Caco-2 (cell line): ENCODE measurements at regions of chr15 and their contacts with region 1.

Region 1: DNA sequence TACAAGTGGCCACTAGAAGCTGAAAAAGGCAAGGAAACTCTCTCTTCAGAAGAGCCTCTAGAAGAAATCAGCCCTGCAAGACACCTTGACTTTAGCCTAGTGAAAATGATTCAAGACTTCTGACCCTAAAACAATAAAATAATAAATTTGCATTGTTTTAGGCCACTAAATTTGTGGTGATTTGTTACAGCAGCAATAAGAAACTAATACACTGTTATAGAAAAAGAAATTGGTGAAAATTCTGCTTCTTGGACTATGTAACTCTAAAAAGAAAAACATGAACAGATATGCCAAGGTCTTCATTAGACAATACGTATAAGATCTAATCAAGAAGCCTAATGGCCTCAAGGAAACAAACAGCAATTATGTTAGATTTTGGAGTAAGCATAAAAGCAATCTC is 36.1 kb downstream of the EXD1 start:
- DNase-seq: no peak
- H3K4me3 ChIP-seq: no peak overlapping the region
- H3K4me3 Mint-ChIP-seq: no peak overlapping the region
- H3K27ac Mint-ChIP-seq: no peak overlapping the region
- H3K4me1 ChIP-seq: no peaks in the 10 kb centered on the region
- H3K4me1 Mint-ChIP-seq: no peaks in the 10 kb centered on the region
- H3K27me3 ChIP-seq: no peaks in the 10 kb centered on the region
- H3K27me3 Mint-ChIP-seq: no peaks in the 10 kb centered on the region
- CTCF ChIP-seq: no peak

Region 2: DNA sequence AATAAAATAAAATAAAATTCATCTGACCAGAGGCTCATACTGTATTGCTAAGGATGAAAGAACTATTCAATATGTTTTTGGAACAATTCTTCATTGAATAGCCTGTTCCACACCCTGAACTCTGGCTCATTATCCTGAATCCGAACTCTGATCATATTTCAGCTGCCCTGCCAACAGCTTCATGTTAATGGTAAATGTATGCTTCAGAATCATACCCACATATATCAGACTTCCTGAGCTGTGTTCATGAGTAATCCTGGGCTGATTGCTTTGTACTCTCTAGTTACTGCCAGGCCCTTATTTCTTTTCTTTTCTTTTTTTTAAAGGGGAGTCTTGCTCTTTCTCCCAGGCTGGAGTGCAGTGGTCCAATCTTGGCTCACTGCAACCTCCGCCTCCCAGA is 90.2 kb before region 1 on chr15:
- CTCF ChIA-PET with region 1: no interaction called
- POLR2A ChIA-PET with region 1: no interaction called
- intact Hi-C with region 1: no loop called
- DNase-seq: no peak
- H3K4me3 ChIP-seq: no peak overlapping the region
- H3K4me3 Mint-ChIP-seq: no peak overlapping the region
- H3K27ac Mint-ChIP-seq: no peak overlapping the region
- H3K4me1 ChIP-seq: no peaks in the 10 kb centered on the region
- H3K4me1 Mint-ChIP-seq: peaks cover 6% of the 10 kb centered on the region
- H3K27me3 ChIP-seq: no peaks in the 10 kb centered on the region
- H3K27me3 Mint-ChIP-seq: no peaks in the 10 kb centered on the region
- CTCF ChIP-seq: no peak

Region 3: DNA sequence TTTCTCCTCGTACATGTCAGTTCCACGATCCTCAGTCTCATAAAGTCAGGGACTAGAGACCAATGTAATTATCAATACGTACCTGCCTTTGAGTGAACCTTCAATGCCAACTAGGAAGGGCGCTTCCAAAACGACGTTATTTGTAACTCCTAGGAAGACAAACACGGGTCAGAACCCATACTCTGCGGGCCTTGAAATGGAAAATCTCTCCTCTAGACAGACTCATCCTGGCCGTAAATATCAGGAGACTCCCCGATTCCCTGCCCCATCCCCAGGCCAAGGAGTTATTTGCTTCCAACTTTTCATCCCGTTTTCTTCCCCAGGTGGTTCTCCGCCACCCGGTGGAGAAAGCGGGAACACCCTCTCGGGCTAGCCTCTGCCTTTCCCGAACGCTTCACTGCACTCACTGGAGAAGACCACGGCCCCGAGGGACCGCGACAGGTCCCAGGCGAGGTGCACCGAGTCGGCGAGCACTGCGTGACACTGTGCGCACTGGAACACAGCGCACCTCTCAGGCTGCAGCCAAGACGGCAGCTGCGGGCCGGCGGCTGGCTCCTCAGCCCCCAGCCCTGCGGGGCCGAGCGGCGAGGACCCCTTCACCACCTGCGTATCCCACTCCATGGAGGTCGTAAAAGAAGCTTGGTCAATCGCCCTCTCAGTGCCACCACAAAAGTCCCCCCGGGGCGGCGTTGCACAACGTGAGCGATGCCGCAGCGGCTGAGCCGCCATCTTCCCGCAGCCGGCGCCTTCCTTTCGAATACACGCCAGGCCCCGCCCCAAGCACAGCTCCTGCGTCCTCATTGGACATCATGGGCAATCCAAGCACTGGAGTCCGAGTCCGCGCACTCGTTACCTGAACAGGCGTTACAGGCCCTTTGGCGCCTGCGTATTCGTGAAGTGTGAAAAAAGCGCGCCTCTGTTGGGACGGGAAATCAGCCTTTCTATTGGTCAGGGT is 137.7 kb after region 1 on chr15 and contains the start of gene OIP5:
- CTCF ChIA-PET with region 1: no interaction called
- POLR2A ChIA-PET with region 1: no interaction called
- intact Hi-C with region 1: no loop called
- DNase-seq: peak; percentile 98 to 99
- H3K4me3 ChIP-seq: peak within 1 kb of the TSS; percentile 87
- H3K4me3 Mint-ChIP-seq: peak within 1 kb of the TSS; percentile 89
- H3K27ac Mint-ChIP-seq: peak within 1 kb of the TSS; percentile 97
- H3K4me1 ChIP-seq: peaks cover 4% of the 10 kb centered on the region; the same call in 1 of the 2 replicates
- H3K4me1 Mint-ChIP-seq: peaks cover 9% of the 10 kb centered on the region
- H3K27me3 ChIP-seq: no peaks in the 10 kb centered on the region
- H3K27me3 Mint-ChIP-seq: no peaks in the 10 kb centered on the region
- CTCF ChIP-seq: peak; percentile 63 to 82
- total RNA-seq, gene OIP5: 23.4 and 26.4 TPM in 2 replicates

Region 4: DNA sequence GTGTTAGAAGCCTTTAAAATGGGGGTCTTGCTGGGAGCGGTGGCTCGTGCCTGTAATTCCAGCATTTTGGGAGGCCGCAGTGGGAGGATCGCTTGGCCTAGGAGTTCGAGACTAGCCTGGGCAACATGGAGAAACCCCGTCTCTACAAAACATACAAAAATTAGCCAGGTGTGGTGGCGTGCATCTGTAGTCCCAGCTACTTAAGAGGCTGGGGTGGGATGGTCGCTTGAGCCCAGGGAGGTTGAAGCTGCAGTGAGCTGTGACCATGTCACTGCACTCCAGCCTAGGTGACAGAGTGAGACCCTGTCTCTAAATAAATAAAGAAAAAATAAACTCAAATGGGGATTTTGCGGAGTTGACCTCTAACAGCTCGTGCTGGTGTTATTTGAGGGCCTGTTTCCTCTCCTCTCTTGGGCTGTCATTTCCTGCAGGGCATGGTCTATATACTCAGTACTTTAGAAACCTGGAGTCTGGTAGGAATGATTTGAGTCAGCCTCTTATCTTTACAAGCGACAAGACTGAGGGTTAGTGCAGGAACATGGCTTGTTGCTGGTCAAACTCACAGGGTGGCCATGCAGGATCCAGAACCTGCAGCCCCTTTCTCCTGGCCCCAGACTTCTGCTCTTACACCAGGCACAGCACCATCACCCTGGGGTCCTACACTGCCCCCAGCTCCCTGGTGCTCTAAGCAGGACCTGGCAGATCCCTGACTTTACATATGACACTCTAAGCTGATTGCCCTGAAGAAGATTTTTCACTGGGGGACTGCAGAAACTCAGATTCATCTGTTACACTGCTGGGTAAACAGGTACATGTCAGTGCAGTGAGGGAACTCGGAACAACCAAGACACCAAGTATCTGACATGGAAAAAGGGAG is 762.8 kb after region 1 on chr15:
- CTCF ChIA-PET with region 1: no interaction called
- POLR2A ChIA-PET with region 1: interaction called, 15 read pairs
- intact Hi-C with region 1: no loop called
- DNase-seq: no peak
- H3K4me3 ChIP-seq: no peak overlapping the region
- H3K4me3 Mint-ChIP-seq: no peak overlapping the region
- H3K27ac Mint-ChIP-seq: peak overlapping the region; percentile 75
- H3K4me1 ChIP-seq: peaks cover 34% of the 10 kb centered on the region
- H3K4me1 Mint-ChIP-seq: peaks cover 30% of the 10 kb centered on the region
- H3K27me3 ChIP-seq: no peaks in the 10 kb centered on the region
- H3K27me3 Mint-ChIP-seq: no peaks in the 10 kb centered on the region
- CTCF ChIP-seq: no peak